Panc1 (cell line): ENCODE measurements at regions of chr3 and their contacts with region 1.

Region 1: GRCh38 chr3:171543759-171544654 is 83.8 kb upstream of the TNIK start:
- DNase-seq: no peak
- ATAC-seq: no peak
- H3K4me3 ChIP-seq: no peak overlapping the region
- H3K27ac ChIP-seq: no peak overlapping the region
- H3K4me1 ChIP-seq: no peaks in the 10 kb centered on the region
- H3K27me3 ChIP-seq: no peaks in the 10 kb centered on the region
- CTCF ChIP-seq: no peak

Region 2: DNA sequence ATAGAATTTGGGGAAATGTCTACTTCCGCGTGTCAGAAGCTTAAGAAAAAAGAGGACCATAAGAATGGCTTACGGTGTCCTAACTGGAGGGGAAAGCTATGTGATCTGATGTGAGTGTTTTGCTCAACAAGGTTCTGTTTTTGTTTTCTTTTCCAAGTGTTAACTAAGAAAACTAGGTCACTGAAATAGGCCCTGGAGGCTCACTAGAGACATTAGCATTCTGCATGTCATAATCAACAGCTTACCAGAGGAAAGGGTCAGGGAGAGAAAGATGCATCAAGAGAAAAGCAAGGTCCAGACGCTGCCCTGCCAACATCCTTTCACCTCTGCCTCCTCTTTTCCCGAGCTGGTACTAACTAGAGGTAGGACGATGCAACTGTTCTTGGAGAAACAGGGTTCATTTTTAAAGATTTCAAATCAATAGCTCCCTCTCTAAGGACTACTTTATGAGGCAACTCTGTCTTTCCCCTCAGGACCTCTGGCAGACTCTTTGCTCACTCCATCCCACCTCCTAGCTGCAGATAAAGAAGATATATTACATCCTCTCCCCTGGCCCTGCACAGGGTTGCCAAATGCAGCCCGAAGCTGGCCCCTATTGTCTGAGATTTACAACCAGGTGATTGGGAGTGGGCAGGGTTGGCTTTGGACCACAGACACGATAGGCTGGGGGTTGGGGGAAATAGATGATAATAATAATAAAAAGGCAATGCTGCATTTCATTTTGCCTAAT is 307.6 kb before region 1 on chr3:
- CTCF ChIA-PET with region 1: interaction called, 13 read pairs
- POLR2A ChIA-PET with region 1: no interaction called
- in situ Hi-C with region 1: no loop called
- intact Hi-C with region 1: no loop called
- DNase-seq: no peak
- ATAC-seq: no peak
- H3K4me3 ChIP-seq: no peak overlapping the region
- H3K27ac ChIP-seq: no peak overlapping the region
- H3K4me1 ChIP-seq: no peaks in the 10 kb centered on the region
- H3K27me3 ChIP-seq: no peaks in the 10 kb centered on the region
- CTCF ChIP-seq: no peak

Region 3: GRCh38 chr3:171526869-171527268 is 17.1 kb before region 1 on chr3:
- CTCF ChIA-PET with region 1: no interaction called
- POLR2A ChIA-PET with region 1: no interaction called
- in situ Hi-C with region 1: no loop called
- intact Hi-C with region 1: no loop called
- DNase-seq: no peak
- ATAC-seq: no peak
- H3K4me3 ChIP-seq: no peak overlapping the region
- H3K27ac ChIP-seq: no peak overlapping the region
- H3K4me1 ChIP-seq: peaks cover 17% of the 10 kb centered on the region
- H3K27me3 ChIP-seq: no peaks in the 10 kb centered on the region
- CTCF ChIP-seq: no peak

Region 4: DNA sequence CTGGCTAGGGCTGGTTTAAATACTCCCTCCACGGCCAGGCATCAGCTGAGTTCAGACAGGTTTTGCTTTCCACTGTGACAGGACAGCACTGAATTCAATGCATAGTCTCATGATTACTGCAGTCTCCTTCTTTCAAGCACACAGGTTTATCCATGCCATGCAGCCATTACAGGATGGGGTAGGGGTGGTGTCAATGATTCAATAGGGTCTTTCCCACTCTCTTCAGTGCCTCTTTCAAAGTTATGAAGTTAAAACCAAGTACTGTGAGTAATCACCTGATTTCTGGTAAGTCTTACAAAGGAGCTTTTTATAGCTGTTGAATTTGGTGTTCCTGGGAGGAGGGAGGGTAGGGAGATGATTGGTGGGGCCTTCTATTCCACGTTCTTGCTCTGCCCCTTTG is 346.4 kb after region 1 on chr3:
- CTCF ChIA-PET with region 1: no interaction called
- POLR2A ChIA-PET with region 1: interaction called, 16 read pairs
- in situ Hi-C with region 1: no loop called
- intact Hi-C with region 1: no loop called
- DNase-seq: no peak
- ATAC-seq: no peak
- H3K4me3 ChIP-seq: no peak overlapping the region
- H3K27ac ChIP-seq: no peak overlapping the region
- H3K4me1 ChIP-seq: no peaks in the 10 kb centered on the region
- H3K27me3 ChIP-seq: peaks cover 14% of the 10 kb centered on the region; the same call in 1 of the 2 replicates
- CTCF ChIP-seq: no peak